Activated CD4-positive, alpha-beta T cell treated with anti-CD3 and anti-CD28 coated beads for 36 hours (primary cell): ENCODE measurements at regions of chr17 and their contacts with region 1.

Region 1: GRCh38 chr17:50478391-50479381 is at the start of gene RSAD1:
- DNase-seq: peak; percentile 93
- ATAC-seq: peak; percentile 94
- H3K4me3 Mint-ChIP-seq: peak within 1 kb of the TSS; percentile 85
- H3K27ac Mint-ChIP-seq: peak within 1 kb of the TSS; percentile 93
- H3K4me1 Mint-ChIP-seq: peaks cover 25% of the 10 kb centered on the region
- H3K27me3 Mint-ChIP-seq: no peaks in the 10 kb centered on the region
- total RNA-seq, gene RSAD1: 21.5 to 29.0 TPM

Region 2: GRCh38 chr17:50114849-50115357 is 363.8 kb before region 1 on chr17:
- CTCF ChIA-PET with region 1: no interaction called
- POLR2A ChIA-PET with region 1: no interaction called
- intact Hi-C with region 1: no loop called
- DNase-seq: peak; percentile 65
- ATAC-seq: peak; percentile 76
- H3K4me3 Mint-ChIP-seq: no peak overlapping the region
- H3K27ac Mint-ChIP-seq: no peak overlapping the region
- H3K4me1 Mint-ChIP-seq: peaks cover 7% of the 10 kb centered on the region
- H3K27me3 Mint-ChIP-seq: peaks cover 31% of the 10 kb centered on the region

Region 3: DNA sequence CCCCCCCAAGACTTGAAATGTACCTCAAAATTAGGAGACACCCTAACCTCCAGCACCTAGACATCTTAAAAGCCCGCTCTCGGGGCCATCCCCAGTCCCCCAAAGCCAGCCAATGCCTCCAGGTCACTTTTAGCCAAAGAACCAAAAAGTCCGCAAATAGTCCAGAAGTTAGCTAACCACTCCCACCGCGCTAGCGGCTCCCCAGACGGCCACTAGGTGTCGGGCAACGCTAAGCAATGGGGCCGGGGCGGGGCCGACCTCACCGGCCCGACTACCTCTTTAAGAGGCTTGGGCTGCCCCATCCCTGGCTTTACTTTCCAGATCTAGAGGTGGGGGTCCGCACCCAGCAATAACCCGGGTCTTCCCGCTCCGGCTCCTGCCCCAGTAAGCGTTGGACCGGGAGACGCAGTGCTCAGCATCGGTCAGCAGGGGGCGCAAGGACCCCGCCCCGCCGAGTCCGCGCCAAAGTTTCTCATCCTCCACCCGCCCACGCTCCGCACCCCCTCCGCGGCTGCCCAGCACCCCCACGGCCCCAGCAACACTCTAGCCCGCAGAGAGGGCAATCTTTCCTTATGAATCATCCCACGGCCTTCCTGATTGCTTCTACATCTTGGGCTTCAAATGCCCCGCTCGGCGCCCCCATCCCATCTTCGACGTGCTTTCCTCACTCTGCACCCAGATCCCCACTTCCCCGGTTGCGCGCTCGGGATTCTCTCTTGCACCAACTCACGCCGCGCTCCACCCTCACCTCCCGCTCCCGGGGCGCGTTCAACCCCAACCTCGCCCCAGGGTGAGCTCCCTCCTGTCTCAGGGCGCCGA is 278.0 kb before region 1 on chr17:
- CTCF ChIA-PET with region 1: no interaction called
- POLR2A ChIA-PET with region 1: no interaction called
- intact Hi-C with region 1: loop called in 1 of 2 experiments (anchors 1 kb)
- DNase-seq: peak; percentile 91
- ATAC-seq: peak; percentile 81
- H3K4me3 Mint-ChIP-seq: peak overlapping the region; percentile 53
- H3K27ac Mint-ChIP-seq: no peak overlapping the region
- H3K4me1 Mint-ChIP-seq: peaks cover 16% of the 10 kb centered on the region
- H3K27me3 Mint-ChIP-seq: peaks cover 43% of the 10 kb centered on the region

Region 4: DNA sequence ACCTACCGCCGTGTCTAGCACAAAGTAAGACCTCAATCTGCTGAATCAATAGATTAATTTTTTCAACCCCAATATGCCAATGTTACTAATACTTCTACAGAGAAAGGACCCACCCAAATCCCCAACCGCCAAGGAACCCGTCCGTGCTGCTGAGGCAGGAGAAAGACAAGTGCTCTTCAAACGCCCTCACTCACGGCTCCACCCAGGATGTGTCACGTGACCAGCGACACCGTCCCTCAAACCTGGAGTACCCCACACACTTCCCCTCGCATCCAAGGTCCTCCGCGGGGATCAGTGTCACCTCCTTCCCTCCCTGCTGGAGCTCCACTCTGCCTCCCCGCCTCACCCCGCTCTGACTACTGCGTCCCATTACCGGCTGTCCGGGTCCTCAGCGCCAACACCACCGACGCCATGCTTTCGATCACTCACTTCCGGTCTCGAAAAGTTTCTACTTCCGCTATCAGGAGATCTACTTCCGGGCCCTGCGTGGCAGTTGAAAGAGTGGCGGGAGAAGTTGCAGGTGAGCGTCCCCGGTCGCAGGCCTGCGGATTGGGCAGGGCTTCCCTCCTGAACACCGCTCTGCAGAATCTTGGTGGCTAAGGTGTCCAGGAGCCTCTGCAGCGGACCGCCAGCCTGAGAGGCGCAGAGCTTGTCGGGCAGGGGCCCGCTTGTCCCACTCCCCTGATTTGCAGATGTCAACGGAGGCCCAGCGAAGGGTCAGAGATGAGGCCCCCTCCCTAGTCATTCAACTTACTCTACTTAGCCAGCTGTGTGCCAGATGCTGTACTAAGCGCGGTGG is 105.7 kb before region 1 on chr17 and contains the starts of genes EME1 and MRPL27:
- CTCF ChIA-PET with region 1: interaction called, 3 read pairs
- POLR2A ChIA-PET with region 1: no interaction called
- intact Hi-C with region 1: loop called (anchors 1 to 5 kb)
- DNase-seq: peak; percentile 89
- ATAC-seq: peak; percentile 95
- H3K4me3 Mint-ChIP-seq: peak within 1 kb of the TSS; percentile 89
- H3K27ac Mint-ChIP-seq: peak within 1 kb of the TSS; percentile 99
- H3K4me1 Mint-ChIP-seq: peaks cover 22% of the 10 kb centered on the region
- H3K27me3 Mint-ChIP-seq: no peaks in the 10 kb centered on the region
- total RNA-seq, gene EME1: 38.3 to 40.8 TPM
- total RNA-seq, gene MRPL27: 40.1 to 56.2 TPM

Region 5: DNA sequence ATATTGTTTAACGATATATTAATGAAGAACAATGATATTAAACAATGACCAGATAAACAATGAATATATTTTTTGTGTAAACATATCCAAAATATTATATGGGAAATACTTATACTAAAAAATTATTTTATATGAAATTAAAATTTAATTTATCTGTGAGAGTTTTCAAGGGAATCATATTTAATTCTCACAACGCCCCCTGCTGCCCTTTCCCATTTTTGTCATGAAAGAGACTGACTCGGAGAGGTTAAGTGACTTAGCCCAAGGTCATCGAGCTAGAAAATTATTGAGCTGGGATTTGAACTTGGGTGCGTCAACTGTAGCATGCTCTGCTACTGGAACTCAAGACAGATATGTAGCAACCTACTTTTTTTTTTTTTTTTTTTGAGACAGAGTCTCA is 22.4 kb after region 1 on chr17:
- CTCF ChIA-PET with region 1: interaction called, 14 read pairs
- POLR2A ChIA-PET with region 1: no interaction called
- intact Hi-C with region 1: loop called in 1 of 2 experiments (anchors 2 kb)
- DNase-seq: peak; percentile 61
- ATAC-seq: peak; percentile 34
- H3K4me3 Mint-ChIP-seq: no peak overlapping the region
- H3K27ac Mint-ChIP-seq: no peak overlapping the region
- H3K4me1 Mint-ChIP-seq: peaks cover 5% of the 10 kb centered on the region
- H3K27me3 Mint-ChIP-seq: peaks cover 2% of the 10 kb centered on the region

Region 6: DNA sequence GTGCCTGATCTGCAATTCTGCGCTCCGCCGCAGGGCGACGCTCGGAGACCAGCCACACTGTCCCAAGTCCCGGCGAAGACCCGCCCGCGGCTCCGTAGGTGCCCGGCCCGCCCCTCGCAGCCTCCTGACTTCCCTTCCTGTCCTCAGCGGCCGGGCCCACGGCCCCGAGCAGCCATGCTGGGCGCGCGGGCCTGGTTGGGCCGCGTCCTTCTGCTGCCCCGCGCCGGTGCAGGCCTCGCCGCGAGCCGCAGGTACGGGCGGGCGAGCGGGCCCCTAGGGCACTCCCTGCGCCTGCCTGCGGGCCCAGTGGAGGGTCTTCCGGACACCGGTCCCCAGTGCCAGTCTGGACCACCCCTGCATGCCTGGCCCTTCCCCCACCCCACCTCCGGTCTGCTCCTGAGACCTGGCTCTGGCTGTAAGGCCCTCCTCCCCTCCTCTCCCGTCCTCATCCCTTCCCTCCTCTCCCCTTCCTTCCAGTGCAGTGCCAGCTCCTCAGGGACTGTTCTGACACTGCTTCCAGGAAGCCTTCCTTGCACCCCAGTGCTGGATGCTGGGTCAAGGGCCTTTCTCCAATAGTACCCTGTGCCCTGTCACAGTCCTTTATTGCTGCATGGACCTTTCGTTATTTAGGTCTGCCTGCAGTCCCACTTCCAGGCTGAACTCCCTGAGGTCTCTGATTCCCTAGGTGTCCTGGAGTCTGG is 68.5 kb after region 1 on chr17 and contains the start of gene SPATA20:
- CTCF ChIA-PET with region 1: interaction called, 5 read pairs
- POLR2A ChIA-PET with region 1: no interaction called
- intact Hi-C with region 1: loop called (anchors 1 to 5 kb)
- DNase-seq: peak; percentile 93
- ATAC-seq: peak; percentile 88
- H3K4me3 Mint-ChIP-seq: peak within 1 kb of the TSS; percentile 63
- H3K27ac Mint-ChIP-seq: no peak within 1 kb of the TSS
- H3K4me1 Mint-ChIP-seq: peaks cover 8% of the 10 kb centered on the region
- H3K27me3 Mint-ChIP-seq: peaks cover 7% of the 10 kb centered on the region
- total RNA-seq, gene SPATA20: 9.0 to 10.7 TPM

Region 7: GRCh38 chr17:50697663-50698274 is 219.1 kb after region 1 on chr17:
- CTCF ChIA-PET with region 1: interaction called, 3 read pairs
- POLR2A ChIA-PET with region 1: no interaction called
- intact Hi-C with region 1: loop called (anchors 5 to 10 kb)
- DNase-seq: no peak
- ATAC-seq: no peak
- H3K4me3 Mint-ChIP-seq: no peak overlapping the region
- H3K27ac Mint-ChIP-seq: peak overlapping the region; percentile 85
- H3K4me1 Mint-ChIP-seq: peaks cover 22% of the 10 kb centered on the region
- H3K27me3 Mint-ChIP-seq: no peaks in the 10 kb centered on the region